ENCODE measurements at regions of chr22 and their contacts with region 1.

Region 1: DNA sequence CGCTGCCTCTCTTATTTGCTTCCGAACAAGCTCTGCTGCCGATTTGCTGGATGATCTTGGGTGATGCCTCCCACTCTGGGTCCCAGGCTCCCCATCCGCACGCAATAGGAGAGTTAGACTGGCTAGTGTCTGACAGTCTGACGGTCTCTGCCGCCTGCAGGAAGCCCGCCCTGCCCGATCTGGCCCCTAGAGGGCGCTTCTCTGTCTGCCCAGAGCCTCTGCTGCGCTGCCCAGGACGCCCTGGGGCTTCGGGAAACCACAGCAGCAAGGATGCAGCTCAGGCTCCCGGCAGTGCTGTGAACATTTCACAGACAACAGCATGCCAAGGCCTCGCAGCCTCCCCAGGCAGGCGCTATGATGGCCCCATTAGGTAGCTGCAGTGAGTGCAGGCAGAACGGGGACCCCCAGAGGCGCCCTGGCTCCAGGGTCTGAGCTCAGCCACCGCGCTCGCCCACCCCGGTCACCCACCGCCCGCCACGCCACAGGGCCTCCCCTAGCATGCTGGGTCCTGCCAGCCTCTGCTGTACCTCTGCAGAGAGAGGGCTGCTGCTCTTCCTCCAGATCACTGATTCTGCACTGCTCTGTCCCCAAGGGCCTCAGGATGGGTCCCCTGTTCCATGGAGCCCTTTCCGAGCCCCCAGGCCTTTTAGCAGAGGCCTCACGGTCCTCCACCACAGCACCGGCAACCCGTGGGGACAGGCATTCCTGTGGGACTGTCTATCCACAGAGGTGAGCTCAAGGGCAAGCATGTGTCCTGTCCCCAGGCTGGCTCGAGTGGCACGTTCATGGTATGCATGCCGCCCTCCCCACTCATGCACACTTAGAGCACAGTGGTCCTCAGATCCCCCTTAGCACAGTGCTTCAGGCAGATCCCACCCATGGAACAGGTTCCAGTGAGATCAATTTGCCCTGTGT is 4.3 kb upstream of the BAIAP2L2 start:
- DNase-seq: peak; percentile 81
- ATAC-seq: peak; percentile 97
- H3K4me3 ChIP-seq: no peak overlapping the region
- H3K27ac ChIP-seq: no peak overlapping the region
- H3K4me1 ChIP-seq: no peaks in the 10 kb centered on the region; the same call in 1 of the 2 replicates
- H3K27me3 ChIP-seq: no peaks in the 10 kb centered on the region
- CTCF ChIP-seq: peak; percentile 79

Region 2: DNA sequence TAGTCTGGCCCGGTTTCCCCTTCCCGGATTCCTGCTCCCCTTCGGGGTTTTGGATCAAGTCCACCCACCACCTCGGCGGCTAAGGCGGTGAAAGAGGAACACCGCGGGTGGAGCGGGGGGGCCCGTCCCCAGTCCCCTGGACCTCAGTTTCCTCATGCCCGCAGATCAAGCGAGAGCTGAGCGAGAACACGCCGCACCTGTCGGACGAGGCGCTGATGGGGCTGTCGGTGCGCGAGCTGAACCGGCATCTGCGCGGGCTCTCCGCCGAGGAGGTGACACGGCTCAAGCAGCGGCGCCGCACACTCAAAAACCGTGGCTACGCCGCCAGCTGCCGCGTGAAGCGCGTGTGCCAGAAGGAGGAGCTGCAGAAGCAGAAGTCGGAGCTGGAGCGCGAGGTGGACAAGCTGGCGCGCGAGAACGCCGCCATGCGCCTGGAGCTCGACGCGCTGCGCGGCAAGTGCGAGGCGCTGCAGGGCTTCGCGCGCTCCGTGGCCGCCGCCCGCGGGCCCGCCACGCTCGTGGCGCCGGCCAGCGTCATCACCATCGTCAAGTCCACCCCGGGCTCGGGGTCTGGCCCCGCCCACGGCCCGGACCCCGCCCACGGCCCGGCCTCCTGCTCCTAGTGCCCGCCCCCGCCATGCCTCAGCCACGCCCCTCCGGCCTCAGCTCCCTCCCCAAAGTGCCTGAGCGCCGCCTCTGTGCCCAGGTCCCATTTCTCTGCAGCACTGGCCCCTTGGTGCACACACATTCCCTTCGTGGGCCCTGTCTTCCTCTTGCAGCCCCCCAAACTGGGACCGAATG is 99.7 kb after region 1 on chr22:
- CTCF ChIA-PET with region 1: no interaction called
- POLR2A ChIA-PET with region 1: no interaction called
- intact Hi-C with region 1: loop called (anchors 10 kb)
- DNase-seq: no peak
- ATAC-seq: no peak
- H3K4me3 ChIP-seq: no peak overlapping the region
- H3K27ac ChIP-seq: no peak overlapping the region
- H3K4me1 ChIP-seq: peaks cover 19% of the 10 kb centered on the region
- H3K27me3 ChIP-seq: no peaks in the 10 kb centered on the region
- CTCF ChIP-seq: no peak

Measured in PC-3 (cell line).